ENCODE measurements at regions of chr2 and their contacts with region 1.

Region 1: GRCh38 chr2:88880441-88880953 is 189.0 kb downstream of the RPIA start:
- DNase-seq: peak; percentile 61
- H3K4me3 Mint-ChIP-seq: no peak overlapping the region
- H3K27ac Mint-ChIP-seq: no peak overlapping the region
- H3K4me1 Mint-ChIP-seq: peaks cover 2% of the 10 kb centered on the region
- H3K27me3 Mint-ChIP-seq: peaks cover 6% of the 10 kb centered on the region

Region 2: DNA sequence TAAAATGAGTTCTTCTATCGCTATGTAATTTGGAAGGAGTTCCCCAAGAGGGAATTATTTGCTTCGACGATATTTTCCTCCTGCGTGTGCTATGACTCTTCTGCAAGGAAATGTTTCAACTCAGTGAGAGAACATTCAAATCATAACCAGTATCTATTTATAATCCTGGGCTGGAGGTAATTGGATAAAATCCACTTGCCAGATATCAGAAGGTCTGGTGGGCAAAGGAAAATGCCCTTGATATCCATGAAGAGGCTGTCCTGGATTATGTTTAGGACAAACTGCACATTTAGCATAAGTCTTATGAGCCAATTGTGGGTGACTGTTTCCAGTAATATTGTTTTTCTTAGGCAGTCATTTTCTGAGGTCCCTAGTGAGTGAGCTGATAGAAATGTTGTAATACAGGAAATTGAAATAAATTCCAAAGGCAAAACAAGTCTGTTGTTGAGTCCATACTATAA is 171.3 kb before region 1 on chr2:
- CTCF ChIA-PET with region 1: no interaction called
- intact Hi-C with region 1: no loop called
- DNase-seq: no peak
- H3K4me3 Mint-ChIP-seq: no peak overlapping the region
- H3K27ac Mint-ChIP-seq: no peak overlapping the region
- H3K4me1 Mint-ChIP-seq: peaks cover 5% of the 10 kb centered on the region
- H3K27me3 Mint-ChIP-seq: no peaks in the 10 kb centered on the region

Region 3: GRCh38 chr2:88831792-88832248 is 48.7 kb before region 1 on chr2:
- CTCF ChIA-PET with region 1: interaction called, 13 read pairs
- intact Hi-C with region 1: loop called (anchors 2 kb)
- DNase-seq: peak; percentile 74
- H3K4me3 Mint-ChIP-seq: no peak overlapping the region
- H3K27ac Mint-ChIP-seq: no peak overlapping the region
- H3K4me1 Mint-ChIP-seq: no peaks in the 10 kb centered on the region
- H3K27me3 Mint-ChIP-seq: peaks cover 2% of the 10 kb centered on the region

Region 4: DNA sequence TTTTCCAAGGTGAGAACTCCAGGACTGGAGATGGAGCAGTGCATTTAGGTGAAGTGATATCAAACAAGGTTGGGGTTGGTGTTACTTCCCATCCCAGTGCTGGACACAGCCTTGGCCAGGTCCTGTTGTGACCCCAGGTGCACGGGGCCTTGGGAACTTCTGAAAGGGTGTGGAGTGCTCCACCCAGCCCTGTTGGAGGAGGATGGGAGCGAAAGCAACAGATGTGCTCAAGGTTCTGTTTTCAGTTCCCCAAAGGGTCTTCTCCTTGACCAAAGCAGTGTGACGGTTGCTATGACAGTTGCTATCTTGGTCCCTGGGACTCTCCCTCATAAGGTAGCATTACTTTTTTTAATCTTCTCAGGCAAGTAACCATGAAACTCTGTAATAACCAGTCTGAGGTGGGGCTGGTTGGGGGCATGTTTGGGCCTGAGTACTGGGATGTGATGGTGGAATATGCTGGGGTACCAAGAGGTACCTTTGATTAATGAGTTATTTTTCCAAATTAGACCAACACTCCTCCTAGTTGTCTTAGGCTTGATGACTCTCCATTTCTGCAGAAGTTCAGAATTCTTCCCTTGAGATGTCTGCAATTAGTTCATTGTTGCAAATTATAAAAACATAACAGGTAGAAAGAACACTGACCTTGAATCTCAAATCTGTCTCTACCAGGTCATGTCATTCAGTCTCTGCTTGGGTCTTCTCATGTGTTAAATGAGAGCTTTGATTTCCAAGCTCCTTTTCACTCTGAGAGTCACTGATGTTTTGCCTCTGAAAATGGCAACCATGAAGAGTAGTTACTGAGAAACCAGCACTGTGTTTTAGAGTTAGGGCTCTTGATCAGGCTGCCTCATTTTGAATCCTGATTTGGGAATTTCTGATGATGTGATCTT is 34.5 kb before region 1 on chr2:
- CTCF ChIA-PET with region 1: no interaction called
- intact Hi-C with region 1: no loop called
- DNase-seq: no peak
- H3K4me3 Mint-ChIP-seq: no peak overlapping the region
- H3K27ac Mint-ChIP-seq: no peak overlapping the region
- H3K4me1 Mint-ChIP-seq: no peaks in the 10 kb centered on the region
- H3K27me3 Mint-ChIP-seq: peaks cover 2% of the 10 kb centered on the region

Region 5: GRCh38 chr2:88897715-88898114 is 17.2 kb after region 1 on chr2:
- CTCF ChIA-PET with region 1: interaction called, 10 read pairs
- intact Hi-C with region 1: no loop called
- DNase-seq: no peak
- H3K4me3 Mint-ChIP-seq: no peak overlapping the region
- H3K27ac Mint-ChIP-seq: no peak overlapping the region
- H3K4me1 Mint-ChIP-seq: no peaks in the 10 kb centered on the region
- H3K27me3 Mint-ChIP-seq: peaks cover 17% of the 10 kb centered on the region

Region 6: DNA sequence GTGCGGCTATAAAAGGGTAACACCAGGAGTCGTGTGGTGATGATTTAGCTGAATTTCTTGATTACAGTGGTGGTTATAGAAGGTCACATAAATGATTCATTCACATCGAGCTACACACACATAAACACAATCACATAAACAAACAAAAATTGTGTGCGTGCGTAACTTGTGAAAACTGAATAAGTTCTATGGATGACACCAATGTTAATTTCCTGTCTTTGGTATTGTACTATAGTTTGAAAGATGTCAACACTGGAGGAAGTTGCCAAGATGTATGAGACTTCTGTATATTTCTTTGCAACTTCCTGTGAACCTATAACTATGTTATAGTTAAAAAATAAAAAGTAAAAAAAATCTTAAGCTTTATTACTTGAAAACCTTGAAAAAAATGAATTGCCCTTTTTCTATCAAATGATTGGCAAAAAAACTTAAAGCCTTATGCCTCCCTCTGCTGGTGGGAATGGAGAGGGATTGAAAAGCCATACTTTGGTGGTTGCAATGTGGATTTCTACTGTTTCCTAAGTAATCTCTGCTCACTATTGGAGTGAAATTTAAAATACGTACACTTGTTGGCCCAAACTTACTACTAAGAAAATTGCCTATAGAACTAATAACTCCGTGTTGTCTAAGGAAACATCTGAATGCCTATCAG is 38.7 kb after region 1 on chr2:
- CTCF ChIA-PET with region 1: interaction called, 17 read pairs
- intact Hi-C with region 1: loop called (anchors 1 kb)
- DNase-seq: peak; percentile 23
- H3K4me3 Mint-ChIP-seq: no peak overlapping the region
- H3K27ac Mint-ChIP-seq: no peak overlapping the region
- H3K4me1 Mint-ChIP-seq: no peaks in the 10 kb centered on the region
- H3K27me3 Mint-ChIP-seq: peaks cover 7% of the 10 kb centered on the region

Region 7: GRCh38 chr2:88950010-88950409 is 69.5 kb after region 1 on chr2:
- CTCF ChIA-PET with region 1: interaction called, 3 read pairs
- intact Hi-C with region 1: loop called (anchors 2 kb)
- DNase-seq: no peak
- H3K4me3 Mint-ChIP-seq: no peak overlapping the region
- H3K27ac Mint-ChIP-seq: no peak overlapping the region
- H3K4me1 Mint-ChIP-seq: no peaks in the 10 kb centered on the region
- H3K27me3 Mint-ChIP-seq: peaks cover 17% of the 10 kb centered on the region